Esophagus muscularis mucosa (tissue), 4 donors: ENCODE measurements at regions of chr20 and their contacts with region 1.

Region 1: GRCh38 chr20:63537525-63538203 is 488 bp upstream of the PTK6 start:
- DNase-seq: peak; percentile 96
- H3K4me3 ChIP-seq: peak overlapping the region; percentile 23 to 51 (median 36)
- H3K27ac ChIP-seq: peak overlapping the region in 3 of 4 donors; percentile 33 to 52 (median 44)
- H3K4me1 ChIP-seq: peaks cover 16 to 34% (median 27%) of the 10 kb centered on the region in 4 donors
- H3K27me3 ChIP-seq: peaks cover 0 to 71% (median 23%) of the 10 kb centered on the region in 4 donors
- CTCF ChIP-seq: peak; percentile 91 to 97 (median 93)
- EP300 ChIP-seq: no peak
- POLR2A ChIP-seq: no peak

Region 2: DNA sequence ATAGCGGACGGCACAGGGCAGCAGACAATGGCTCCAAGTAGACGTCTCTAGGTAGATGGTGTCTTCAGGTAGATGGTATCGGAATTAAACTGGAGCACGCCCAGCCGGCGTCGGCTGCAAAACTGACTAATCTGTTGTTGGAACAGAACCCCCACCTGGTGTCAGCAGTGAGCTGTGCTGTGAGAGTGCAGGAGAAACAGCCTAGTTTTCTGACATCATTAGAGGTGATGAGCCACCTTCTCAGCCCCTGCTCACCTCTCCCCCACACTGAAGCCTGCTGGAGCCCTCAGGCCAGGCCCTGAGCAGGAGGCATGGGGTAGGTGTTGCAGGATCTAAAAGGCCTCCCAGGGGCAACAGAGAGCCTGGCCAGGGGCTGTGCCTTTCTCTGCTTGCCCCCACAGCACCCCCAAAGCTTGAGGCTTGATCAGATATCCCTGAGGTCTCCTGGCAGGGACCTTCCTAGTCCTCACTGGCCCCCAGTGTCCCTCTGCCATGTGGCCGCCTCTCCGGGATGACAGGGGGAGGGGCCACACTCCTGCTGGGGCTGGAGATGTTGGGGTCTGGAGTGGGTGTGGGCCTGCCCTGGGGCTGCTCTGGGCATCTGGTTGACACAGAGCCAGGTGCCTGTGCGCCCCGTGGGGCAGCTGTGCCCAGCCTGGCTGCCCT is 43.3 kb after region 1 on chr20:
- intact Hi-C with region 1: no loop called
- DNase-seq: no peak
- H3K4me3 ChIP-seq: no peak overlapping the region
- H3K27ac ChIP-seq: no peak overlapping the region
- H3K4me1 ChIP-seq: peaks cover 0 to 8% (median 2%) of the 10 kb centered on the region in 4 donors
- H3K27me3 ChIP-seq: peaks cover 0 to 10% (median 0%) of the 10 kb centered on the region in 4 donors
- CTCF ChIP-seq: peak in 1 of 3 experiments; percentile 14
- EP300 ChIP-seq: no peak
- POLR2A ChIP-seq: no peak

Region 3: DNA sequence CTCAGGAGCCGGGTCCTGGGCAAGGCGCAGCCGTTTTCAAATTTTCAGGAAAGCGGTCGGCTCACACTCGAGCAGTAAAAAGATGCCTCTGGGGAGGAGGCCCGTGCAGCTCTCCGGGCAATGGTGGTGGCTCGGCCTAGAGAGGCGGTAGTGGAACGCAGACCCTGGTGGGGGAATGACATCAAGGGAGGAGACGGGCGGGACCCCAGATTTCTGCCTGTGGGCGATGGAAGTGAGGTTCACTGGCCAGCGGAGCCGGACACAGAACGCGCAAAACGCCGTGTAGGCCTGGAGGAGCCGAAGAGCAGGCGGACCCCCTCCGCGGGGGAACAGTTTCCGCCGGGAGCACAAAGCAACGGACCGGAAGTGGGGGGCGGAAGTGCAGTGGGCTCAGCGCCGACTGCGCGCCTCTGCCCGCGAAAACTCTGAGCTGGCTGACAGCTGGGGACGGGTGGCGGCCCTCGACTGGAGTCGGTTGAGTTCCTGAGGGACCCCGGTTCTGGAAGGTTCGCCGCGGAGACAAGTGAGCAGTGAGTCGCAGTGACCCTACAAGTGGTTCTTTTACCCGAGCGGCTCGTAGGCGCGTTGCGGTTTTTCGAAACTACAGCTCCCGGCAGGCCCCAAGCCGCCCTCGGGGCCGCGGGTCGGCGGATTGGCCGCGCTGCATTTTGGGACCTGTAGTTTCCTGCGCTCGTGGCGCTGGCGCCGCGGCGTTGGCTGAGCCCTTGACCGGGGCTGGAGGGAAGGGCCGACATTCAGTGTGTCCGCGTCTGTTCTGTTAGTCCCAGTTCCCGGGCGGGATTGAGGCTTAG is 120.5 kb after region 1 on chr20 and contains the start of gene RTEL1:
- intact Hi-C with region 1: loop called (anchors 10 kb)
- DNase-seq: peak; percentile 97
- H3K4me3 ChIP-seq: peak within 1 kb of the TSS; percentile 65 to 75 (median 70)
- H3K27ac ChIP-seq: peak within 1 kb of the TSS; percentile 86 to 91 (median 87)
- H3K4me1 ChIP-seq: peaks cover 27 to 43% (median 40%) of the 10 kb centered on the region in 4 donors
- H3K27me3 ChIP-seq: no peaks in the 10 kb centered on the region
- CTCF ChIP-seq: peak in 1 of 3 experiments; percentile 4
- EP300 ChIP-seq: no peak
- POLR2A ChIP-seq: peak; percentile 54
- total RNA-seq, gene RTEL1: 8.4 to 13.4 (median 9.6) TPM

Region 4: DNA sequence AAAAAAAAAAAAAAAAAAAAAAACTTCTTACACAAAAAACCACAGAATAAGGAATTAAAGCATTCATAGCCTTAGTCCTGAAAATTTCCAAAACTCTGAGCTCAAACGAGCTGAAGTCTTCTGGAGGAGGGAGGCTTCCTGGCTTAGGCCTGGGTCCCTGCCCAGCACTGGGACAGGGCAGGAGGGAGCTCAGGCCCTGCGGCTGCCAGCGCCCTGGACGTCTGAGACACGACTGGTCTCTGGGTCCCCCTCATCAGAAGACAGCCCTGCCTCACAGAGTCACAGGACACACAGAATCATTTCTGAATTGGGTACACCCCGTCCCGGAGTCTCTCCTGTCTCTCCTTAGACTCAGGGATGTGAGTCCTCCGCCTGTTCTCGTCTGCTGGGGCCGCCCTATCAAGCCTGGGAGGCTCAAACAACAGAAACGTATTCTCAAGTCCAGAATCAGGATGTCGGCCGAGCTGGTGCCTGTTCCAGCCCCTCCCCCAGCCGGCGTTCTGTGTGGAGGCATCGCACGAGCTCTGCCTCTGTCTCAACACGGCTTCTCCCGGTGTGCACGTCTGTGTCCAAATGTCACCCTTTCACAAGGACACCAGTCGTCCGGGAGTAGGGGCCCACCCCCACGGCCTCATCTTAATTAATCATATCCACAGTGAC is 254.0 kb after region 1 on chr20:
- intact Hi-C with region 1: loop called (anchors 2 kb)
- DNase-seq: no peak
- H3K4me3 ChIP-seq: no peak overlapping the region
- H3K27ac ChIP-seq: peak overlapping the region in 2 of 4 donors; percentile 38 to 68
- H3K4me1 ChIP-seq: peaks cover 0 to 40% (median 10%) of the 10 kb centered on the region in 4 donors
- H3K27me3 ChIP-seq: no peaks in the 10 kb centered on the region
- CTCF ChIP-seq: no peak
- EP300 ChIP-seq: no peak
- POLR2A ChIP-seq: no peak